ENCODE measurements at regions of chr11 and their contacts with region 1.

Region 1: GRCh38 chr11:68038718-68039525 is at the start of gene TCIRG1:
- DNase-seq: peak; percentile 90 to 91
- ATAC-seq: peak; percentile 74 to 92 (median 88)
- H3K4me3 ChIP-seq: peak within 1 kb of the TSS; percentile 52 to 84 (median 71)
- H3K27ac ChIP-seq: peak within 1 kb of the TSS; percentile 77 to 97 (median 94)
- H3K4me1 ChIP-seq: peaks cover 28 to 68% (median 46%) of the 10 kb centered on the region in 9 donors
- H3K27me3 ChIP-seq: no peaks in the 10 kb centered on the region
- CTCF ChIP-seq: peak in 1 of 9 donors; percentile 7
- total RNA-seq, gene TCIRG1: 7.9 to 44.8 (median 14.6) TPM

Region 2: DNA sequence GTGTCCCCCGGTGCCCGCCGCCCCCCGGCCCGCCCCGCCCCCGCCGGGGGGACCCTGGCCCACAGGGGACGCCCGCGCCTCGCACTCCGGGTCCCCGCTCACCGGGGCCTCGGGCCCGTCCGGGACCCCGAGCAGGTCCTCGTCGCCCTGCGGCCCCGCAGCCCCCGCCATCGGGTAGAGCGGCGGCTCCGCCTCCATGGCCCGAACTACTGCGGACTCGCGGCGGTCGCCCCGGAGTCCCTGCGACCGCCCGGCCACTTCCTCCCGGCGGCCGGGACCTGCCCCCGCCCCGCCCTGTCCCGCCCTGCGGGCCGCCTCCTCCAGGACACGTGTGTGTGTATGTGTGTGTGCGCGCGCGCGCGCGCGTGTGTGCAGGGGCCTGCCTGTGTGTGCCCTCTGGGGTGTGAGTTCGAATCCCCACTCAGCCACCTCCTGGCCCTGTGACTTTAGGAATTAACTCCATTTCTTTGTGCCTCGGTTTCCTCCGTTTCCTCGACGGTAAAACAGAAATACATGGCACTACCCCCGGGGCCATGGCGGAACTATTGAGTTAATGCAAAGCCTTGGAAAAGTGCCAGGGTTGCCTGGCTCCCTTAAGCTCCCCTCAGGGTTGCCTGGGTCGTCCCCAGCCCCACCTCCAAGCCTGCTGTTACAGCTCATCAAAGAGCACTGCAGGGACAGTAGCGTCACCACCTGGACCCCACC is 34.9 kb before region 1 on chr11 and contains the start of gene UNC93B1:
- intact Hi-C with region 1: loop called in 1 of 10 experiments (anchors 5 kb)
- DNase-seq: peak; percentile 90 to 93
- ATAC-seq: peak; percentile 86 to 95 (median 92)
- H3K4me3 ChIP-seq: peak within 1 kb of the TSS; percentile 56 to 82 (median 72)
- H3K27ac ChIP-seq: peak within 1 kb of the TSS in 9 of 10 donors; percentile 51 to 91 (median 79)
- H3K4me1 ChIP-seq: peaks cover 0 to 29% (median 14%) of the 10 kb centered on the region in 9 donors
- H3K27me3 ChIP-seq: no peaks in the 10 kb centered on the region
- CTCF ChIP-seq: no peak
- total RNA-seq, gene UNC93B1: 3.2 to 18.2 (median 6.2) TPM

Region 3: GRCh38 chr11:68121067-68121899 is 82.4 kb after region 1 on chr11 and contains the start of gene CHKA:
- intact Hi-C with region 1: loop called in 4 of 10 experiments (anchors 2 to 10 kb)
- DNase-seq: peak; percentile 91 to 95
- ATAC-seq: peak; percentile 93 to 97 (median 96)
- H3K4me3 ChIP-seq: peak within 1 kb of the TSS; percentile 31 to 90 (median 65)
- H3K27ac ChIP-seq: peak within 1 kb of the TSS; percentile 83 to 100 (median 98)
- H3K4me1 ChIP-seq: peaks cover 3 to 57% (median 40%) of the 10 kb centered on the region in 9 donors
- H3K27me3 ChIP-seq: no peaks in the 10 kb centered on the region
- CTCF ChIP-seq: peak in 1 of 9 donors; percentile 15
- total RNA-seq, gene CHKA: 7.0 to 11.8 (median 9.2) TPM

Region 4: DNA sequence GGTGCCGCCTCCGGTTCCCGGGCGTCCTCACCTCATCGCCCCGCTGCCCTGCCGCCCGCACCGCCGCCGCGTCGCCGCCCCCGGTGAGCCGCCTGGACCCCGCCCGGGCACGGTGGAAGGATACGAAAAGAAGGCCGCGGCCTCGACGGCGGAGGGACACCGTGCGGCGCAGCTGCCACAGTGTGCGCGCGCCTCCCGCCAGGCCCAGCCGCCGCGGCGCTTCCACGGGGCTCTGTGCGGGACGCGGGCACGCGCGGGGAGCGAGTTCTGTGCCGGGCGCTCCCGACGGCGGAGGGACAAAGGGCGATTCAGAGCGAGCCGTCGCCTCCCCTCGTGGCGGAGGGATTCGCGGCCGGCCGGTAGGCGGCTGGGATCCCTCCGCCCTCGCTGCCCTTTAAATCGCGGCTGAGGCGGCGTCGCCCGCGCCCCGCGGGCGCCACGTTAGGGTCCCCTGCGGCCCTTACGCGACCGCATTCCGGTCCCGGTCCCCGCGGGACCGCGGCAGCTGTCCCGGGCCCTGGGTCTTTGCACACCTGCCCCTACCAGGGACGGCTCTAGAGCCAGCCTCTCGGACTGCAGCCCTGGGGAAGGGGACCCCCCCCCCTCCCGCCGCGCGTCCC is 174.7 kb after region 1 on chr11:
- intact Hi-C with region 1: loop called in 3 of 10 experiments (anchors 5 to 10 kb)
- DNase-seq: peak; percentile 87 to 90
- ATAC-seq: peak; percentile 59 to 80 (median 69)
- H3K4me3 ChIP-seq: peak overlapping the region; percentile 68 to 97 (median 81)
- H3K27ac ChIP-seq: peak overlapping the region; percentile 94 to 100 (median 100)
- H3K4me1 ChIP-seq: peaks cover 17 to 65% (median 49%) of the 10 kb centered on the region in 9 donors
- H3K27me3 ChIP-seq: no peaks in the 10 kb centered on the region
- CTCF ChIP-seq: peak in 3 of 9 donors; percentile 7 to 18 (median 9)

Measured in heart right ventricle (tissue), 16 donors.